Activated CD4-positive, alpha-beta T cell treated with anti-CD3 and anti-CD28 coated beads, Interleukin-2, amount 10 ng/mL, durations not matched to agents 24 days and 14 days (primary cell): ENCODE measurements at regions of chr5 and their contacts with region 1.

Region 1: DNA sequence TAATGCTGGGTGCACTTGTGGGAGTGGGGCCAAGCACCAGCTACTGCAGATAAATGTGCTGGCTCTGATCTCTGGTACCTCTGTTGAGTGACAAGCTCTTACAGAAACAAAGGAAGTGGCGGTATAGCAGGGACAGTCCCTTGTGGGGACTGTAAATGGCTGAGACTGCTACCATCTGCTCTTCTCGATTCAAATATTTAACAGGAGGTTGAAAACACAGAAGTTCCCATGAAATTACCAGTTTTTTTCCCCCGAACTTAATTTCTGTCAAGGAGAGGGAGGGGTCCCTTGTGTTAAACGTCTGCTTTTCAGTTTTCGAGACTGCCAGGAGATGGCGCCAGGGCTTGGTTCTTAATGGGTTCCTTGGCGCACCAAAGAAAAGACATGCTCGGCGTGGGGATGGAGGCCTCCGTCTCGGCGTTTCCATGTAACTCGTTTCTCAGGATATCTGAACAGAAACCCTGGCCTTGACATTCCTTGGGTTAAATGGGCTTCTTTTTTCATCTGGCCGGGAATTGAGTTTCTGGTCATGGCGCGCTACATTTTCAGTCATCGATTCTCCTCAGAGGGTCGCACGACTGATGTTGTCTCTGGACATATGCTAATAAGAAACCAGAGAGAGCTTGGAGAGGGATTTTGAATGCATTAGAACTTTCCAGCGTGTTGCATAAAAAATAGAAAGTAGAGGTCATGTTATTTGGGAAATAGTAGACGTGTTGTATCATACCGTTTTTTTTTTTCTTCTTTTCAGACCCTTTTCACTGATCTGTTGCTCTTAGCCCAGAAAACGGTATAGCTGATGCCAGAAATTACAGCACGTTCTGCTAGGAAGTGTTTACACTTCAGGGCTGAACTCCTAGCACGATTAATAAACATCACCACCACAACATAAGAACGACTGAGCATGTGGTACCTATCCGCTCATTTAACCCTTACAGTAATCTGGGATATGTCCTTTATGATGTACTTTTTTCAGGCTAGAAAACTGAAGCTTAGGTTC is 64.0 kb downstream of the CARTPT start:
- DNase-seq: peak; percentile 75
- H3K4me3 Mint-ChIP-seq: peak overlapping the region; percentile 32
- H3K27ac Mint-ChIP-seq: no peak overlapping the region
- H3K4me1 Mint-ChIP-seq: peaks cover 15% of the 10 kb centered on the region
- H3K27me3 Mint-ChIP-seq: peaks cover 11% of the 10 kb centered on the region

Region 2: GRCh38 chr5:72018146-72018803 is 235.2 kb after region 1 on chr5:
- intact Hi-C with region 1: loop called (anchors 2 kb)
- DNase-seq: peak; percentile 86
- H3K4me3 Mint-ChIP-seq: no peak overlapping the region
- H3K27ac Mint-ChIP-seq: no peak overlapping the region
- H3K4me1 Mint-ChIP-seq: no peaks in the 10 kb centered on the region
- H3K27me3 Mint-ChIP-seq: peaks cover 9% of the 10 kb centered on the region